ENCODE measurements at regions of chr3 and their contacts with region 1.

Region 1: GRCh38 chr3:72310419-72311380 is 525.8 kb upstream of the PROK2 start:
- DNase-seq: peak; percentile 89
- ATAC-seq: peak; percentile 98
- H3K4me3 ChIP-seq: peak overlapping the region; percentile 7 to 53 (median 18)
- H3K4me3 Mint-ChIP-seq: peak overlapping the region; percentile 82
- H3K27ac ChIP-seq: peak overlapping the region; percentile 76 to 88
- H3K27ac Mint-ChIP-seq: peak overlapping the region; percentile 90
- H3K4me1 ChIP-seq: peaks cover 42 to 46% of the 10 kb centered on the region in 2 donors
- H3K4me1 Mint-ChIP-seq: peaks cover 55% of the 10 kb centered on the region
- H3K27me3 ChIP-seq: no peaks in the 10 kb centered on the region
- H3K27me3 Mint-ChIP-seq: no peaks in the 10 kb centered on the region
- CTCF ChIP-seq: no peak

Region 2: GRCh38 chr3:72082186-72082715 is 228.4 kb before region 1 on chr3:
- CTCF ChIA-PET with region 1: no interaction called
- POLR2A ChIA-PET with region 1: interaction called, 3 read pairs
- intact Hi-C with region 1: loop called (anchors 2 kb)
- DNase-seq: peak; percentile 89
- ATAC-seq: peak; percentile 84
- H3K4me3 ChIP-seq: peak overlapping the region in 4 of 5 experiments; percentile 3 to 31 (median 12)
- H3K4me3 Mint-ChIP-seq: peak overlapping the region; percentile 61
- H3K27ac ChIP-seq: peak overlapping the region; percentile 43 to 66
- H3K27ac Mint-ChIP-seq: peak overlapping the region; percentile 47
- H3K4me1 ChIP-seq: peaks cover 65 to 73% of the 10 kb centered on the region in 2 donors
- H3K4me1 Mint-ChIP-seq: peaks cover 71% of the 10 kb centered on the region
- H3K27me3 ChIP-seq: peaks cover 0 to 12% (median 4%) of the 10 kb centered on the region in 4 experiments
- H3K27me3 Mint-ChIP-seq: peaks cover 8% of the 10 kb centered on the region
- CTCF ChIP-seq: no peak

Region 3: GRCh38 chr3:72288955-72289691 is 21.6 kb before region 1 on chr3:
- CTCF ChIA-PET with region 1: no interaction called
- POLR2A ChIA-PET with region 1: no interaction called
- intact Hi-C with region 1: loop called (anchors 2 kb)
- DNase-seq: peak; percentile 73
- ATAC-seq: peak; percentile 69
- H3K4me3 ChIP-seq: peak overlapping the region; percentile 17 to 69 (median 52)
- H3K4me3 Mint-ChIP-seq: peak overlapping the region; percentile 87
- H3K27ac ChIP-seq: no peak overlapping the region
- H3K27ac Mint-ChIP-seq: peak overlapping the region; percentile 5
- H3K4me1 ChIP-seq: peaks cover 10 to 21% of the 10 kb centered on the region in 2 donors
- H3K4me1 Mint-ChIP-seq: peaks cover 24% of the 10 kb centered on the region
- H3K27me3 ChIP-seq: peaks cover 0 to 14% (median 2%) of the 10 kb centered on the region in 4 experiments
- H3K27me3 Mint-ChIP-seq: peaks cover 14% of the 10 kb centered on the region
- CTCF ChIP-seq: no peak

Region 4: DNA sequence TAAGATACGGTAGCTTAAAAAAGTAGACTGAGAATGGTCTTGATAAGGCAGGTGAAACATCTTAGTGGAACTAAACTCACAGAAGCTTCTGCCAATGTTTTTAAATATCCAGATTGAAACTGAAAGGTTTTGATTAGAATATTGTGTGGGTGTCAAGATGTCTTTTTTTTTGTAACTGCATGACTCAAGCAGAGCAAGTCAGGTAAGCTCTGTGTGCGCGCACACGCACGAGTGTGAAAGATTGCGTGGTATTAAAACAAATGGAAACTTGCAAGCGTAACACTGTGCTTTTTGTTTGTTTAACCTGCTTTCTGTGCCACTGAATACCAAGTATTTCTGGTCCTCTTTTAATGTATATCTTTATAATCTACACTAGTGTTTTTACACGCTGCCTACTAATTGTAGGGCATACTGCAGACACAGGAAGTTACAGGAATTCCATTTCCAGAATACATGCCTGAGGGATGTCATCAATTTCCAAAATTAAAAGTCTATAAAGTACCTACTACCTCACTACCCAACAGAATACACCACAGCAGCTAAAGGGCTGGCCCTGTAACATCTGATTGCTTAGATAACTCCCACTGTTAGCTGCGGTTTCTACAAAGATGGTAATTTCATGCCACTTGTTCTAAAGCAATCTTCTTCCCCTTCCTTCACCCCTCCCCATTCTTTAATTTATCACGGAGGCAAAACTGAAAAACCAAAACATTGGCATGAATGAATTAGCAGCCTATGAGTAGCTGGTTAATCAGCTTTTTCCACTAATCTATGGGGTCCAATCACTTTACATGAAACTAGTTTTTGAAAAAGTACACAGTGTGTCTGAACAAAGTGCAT is 64.8 kb after region 1 on chr3:
- CTCF ChIA-PET with region 1: no interaction called
- POLR2A ChIA-PET with region 1: no interaction called
- intact Hi-C with region 1: loop called (anchors 5 kb)
- DNase-seq: no peak
- ATAC-seq: no peak
- H3K4me3 ChIP-seq: no peak overlapping the region
- H3K4me3 Mint-ChIP-seq: no peak overlapping the region
- H3K27ac ChIP-seq: no peak overlapping the region
- H3K27ac Mint-ChIP-seq: no peak overlapping the region
- H3K4me1 ChIP-seq: peaks cover 7% of the 10 kb centered on the region in 2 donors
- H3K4me1 Mint-ChIP-seq: peaks cover 25% of the 10 kb centered on the region
- H3K27me3 ChIP-seq: no peaks in the 10 kb centered on the region
- H3K27me3 Mint-ChIP-seq: no peaks in the 10 kb centered on the region
- CTCF ChIP-seq: no peak